ENCODE measurements at regions of chr19 and their contacts with region 1.

Region 1: DNA sequence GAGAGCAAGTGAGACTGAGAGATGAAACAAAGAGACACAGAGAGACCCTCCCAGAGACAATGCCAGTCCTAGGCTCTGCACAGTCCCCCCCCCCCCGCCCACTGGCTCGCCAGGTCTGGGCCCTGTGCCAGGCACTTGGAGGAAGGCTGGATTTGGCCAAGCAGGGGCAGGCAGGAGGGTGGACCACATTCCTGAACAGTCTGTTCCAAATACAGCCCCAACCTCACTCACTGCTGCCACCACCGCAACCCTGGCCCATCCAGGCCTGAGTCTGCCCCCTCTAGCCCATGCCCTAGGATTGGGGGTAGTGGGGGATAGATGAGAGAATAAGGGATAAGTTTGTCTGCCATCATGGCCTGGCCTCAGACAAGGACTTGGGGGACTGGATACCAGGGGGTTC is 19.0 kb downstream of the CYP2F1 start:
- DNase-seq: no peak
- ATAC-seq: no peak
- H3K4me3 ChIP-seq: no peak overlapping the region
- H3K4me3 Mint-ChIP-seq: peak overlapping the region; percentile 79
- H3K27ac ChIP-seq: no peak overlapping the region
- H3K27ac Mint-ChIP-seq: no peak overlapping the region
- H3K4me1 ChIP-seq: peaks cover 25% of the 10 kb centered on the region
- H3K4me1 Mint-ChIP-seq: peaks cover 16% of the 10 kb centered on the region
- H3K27me3 ChIP-seq: no peaks in the 10 kb centered on the region
- H3K27me3 Mint-ChIP-seq: no peaks in the 10 kb centered on the region
- CTCF ChIP-seq: no peak

Region 2: DNA sequence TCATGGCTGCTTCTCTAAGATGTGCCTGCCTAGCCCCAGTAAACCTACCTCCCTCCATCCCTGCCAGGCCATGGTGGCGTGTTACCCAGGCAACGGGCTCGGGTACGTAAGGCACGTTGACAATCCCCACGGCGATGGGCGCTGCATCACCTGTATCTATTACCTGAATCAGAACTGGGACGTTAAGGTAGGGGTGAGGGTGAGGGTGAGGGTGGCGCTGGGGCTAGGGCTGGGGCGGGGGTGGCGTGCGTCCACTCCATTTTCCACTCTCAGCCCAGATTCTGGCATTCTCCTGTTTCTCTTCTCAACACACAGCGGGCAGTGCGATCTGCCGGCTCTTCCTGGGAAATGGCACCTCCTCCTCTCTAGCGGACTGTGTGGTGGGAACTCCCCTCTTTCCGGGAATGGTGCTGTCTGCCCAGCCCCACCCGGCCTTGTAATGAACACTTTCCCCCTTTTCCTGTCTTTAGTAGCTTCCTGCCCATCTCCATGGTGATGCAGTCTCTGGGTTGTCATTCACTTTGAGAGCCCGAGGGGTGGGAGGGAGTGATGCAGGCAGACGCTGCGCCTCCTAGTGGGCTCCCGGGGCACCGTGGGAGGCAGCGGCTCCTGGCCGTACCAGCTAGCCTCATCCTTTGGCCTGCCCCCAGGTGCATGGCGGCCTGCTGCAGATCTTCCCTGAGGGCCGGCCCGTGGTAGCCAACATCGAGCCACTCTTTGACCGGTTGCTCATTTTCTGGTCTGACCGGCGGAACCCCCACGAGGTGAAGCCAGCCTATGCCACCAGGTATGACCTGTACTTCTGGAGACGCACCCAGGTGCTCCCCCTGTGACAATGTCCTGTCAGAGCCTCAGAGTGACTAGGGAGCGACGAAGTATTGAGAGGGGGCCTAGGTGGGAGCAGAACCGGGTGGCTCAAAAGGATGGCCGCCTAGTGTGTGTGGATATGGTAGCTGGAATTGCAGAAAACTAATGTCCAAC is 326.5 kb before region 1 on chr19:
- CTCF ChIA-PET with region 1: no interaction called
- POLR2A ChIA-PET with region 1: no interaction called
- intact Hi-C with region 1: loop called in 1 of 2 experiments (anchors 5 kb)
- DNase-seq: peak; percentile 66 to 95 (median 75)
- ATAC-seq: peak; percentile 47
- H3K4me3 ChIP-seq: peak overlapping the region; percentile 24
- H3K4me3 Mint-ChIP-seq: peak overlapping the region; percentile 96
- H3K27ac ChIP-seq: peak overlapping the region; percentile 86 to 88
- H3K27ac Mint-ChIP-seq: peak overlapping the region; percentile 90
- H3K4me1 ChIP-seq: peaks cover 100% of the 10 kb centered on the region
- H3K4me1 Mint-ChIP-seq: peaks cover 85% of the 10 kb centered on the region
- H3K27me3 ChIP-seq: no peaks in the 10 kb centered on the region
- H3K27me3 Mint-ChIP-seq: no peaks in the 10 kb centered on the region
- CTCF ChIP-seq: peak; percentile 79

Region 3: GRCh38 chr19:41089955-41090354 is 43.3 kb before region 1 on chr19:
- CTCF ChIA-PET with region 1: no interaction called
- POLR2A ChIA-PET with region 1: no interaction called
- intact Hi-C with region 1: no loop called
- DNase-seq: peak in 1 of 14 experiments; percentile 13
- ATAC-seq: no peak
- H3K4me3 ChIP-seq: no peak overlapping the region
- H3K4me3 Mint-ChIP-seq: peak overlapping the region; percentile 49
- H3K27ac ChIP-seq: no peak overlapping the region
- H3K27ac Mint-ChIP-seq: no peak overlapping the region
- H3K4me1 ChIP-seq: peaks cover 3% of the 10 kb centered on the region
- H3K4me1 Mint-ChIP-seq: no peaks in the 10 kb centered on the region
- H3K27me3 ChIP-seq: peaks cover 24 to 28% of the 10 kb centered on the region in 2 experiments
- H3K27me3 Mint-ChIP-seq: peaks cover 94% of the 10 kb centered on the region
- CTCF ChIP-seq: no peak